OCI-LY7 (cell line): ENCODE measurements at regions of chr10 and their contacts with region 1.

Region 1: DNA sequence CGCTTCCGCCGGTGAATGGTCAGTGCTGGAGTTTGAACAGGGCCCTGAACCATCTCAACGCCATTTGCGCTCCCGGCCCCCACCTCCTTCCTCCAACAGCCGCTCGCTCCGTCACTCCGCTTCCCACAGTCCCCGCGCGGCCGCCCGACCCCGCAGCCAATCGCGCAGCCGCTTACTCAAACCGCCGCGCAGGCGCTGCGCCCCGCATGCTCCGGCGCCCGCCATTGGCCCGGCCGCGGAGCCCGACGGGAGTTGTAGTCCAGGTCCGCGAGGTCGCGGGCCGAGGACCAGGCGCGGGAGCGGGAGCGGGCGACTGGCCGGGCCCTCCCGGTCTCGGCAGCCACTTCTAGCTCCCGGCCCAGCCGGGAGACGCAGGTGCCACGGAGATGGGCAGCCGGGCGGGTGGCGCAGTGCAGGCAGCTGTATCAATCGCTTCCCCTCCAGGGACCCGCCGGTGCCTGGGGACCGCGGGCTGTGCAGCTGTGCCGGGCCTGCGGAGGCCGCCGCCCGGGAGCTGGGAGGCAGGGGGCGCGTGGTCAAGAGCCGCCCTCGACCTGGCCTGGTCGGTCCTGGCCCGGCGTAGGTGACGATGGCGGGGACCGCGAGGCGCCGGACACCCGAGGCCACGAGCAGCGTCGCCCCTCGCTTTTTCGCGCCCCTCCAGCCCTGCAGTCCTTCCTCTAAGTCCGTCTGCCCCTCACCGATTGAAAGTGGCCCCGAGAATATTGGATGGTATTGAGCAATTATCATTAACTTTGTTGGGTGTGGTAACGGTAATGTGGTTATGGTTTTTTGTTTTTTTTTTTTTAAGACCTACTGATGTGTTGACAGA is at the start of gene WAPL:
- DNase-seq: peak; percentile 95
- H3K4me3 ChIP-seq: peak within 1 kb of the TSS; percentile 93
- H3K27ac ChIP-seq: peak within 1 kb of the TSS; percentile 70
- H3K4me1 ChIP-seq: peaks cover 56% of the 10 kb centered on the region
- CTCF ChIP-seq: no peak
- total RNA-seq, gene WAPL: 51.1 and 56.6 TPM in 2 replicates

Region 2: DNA sequence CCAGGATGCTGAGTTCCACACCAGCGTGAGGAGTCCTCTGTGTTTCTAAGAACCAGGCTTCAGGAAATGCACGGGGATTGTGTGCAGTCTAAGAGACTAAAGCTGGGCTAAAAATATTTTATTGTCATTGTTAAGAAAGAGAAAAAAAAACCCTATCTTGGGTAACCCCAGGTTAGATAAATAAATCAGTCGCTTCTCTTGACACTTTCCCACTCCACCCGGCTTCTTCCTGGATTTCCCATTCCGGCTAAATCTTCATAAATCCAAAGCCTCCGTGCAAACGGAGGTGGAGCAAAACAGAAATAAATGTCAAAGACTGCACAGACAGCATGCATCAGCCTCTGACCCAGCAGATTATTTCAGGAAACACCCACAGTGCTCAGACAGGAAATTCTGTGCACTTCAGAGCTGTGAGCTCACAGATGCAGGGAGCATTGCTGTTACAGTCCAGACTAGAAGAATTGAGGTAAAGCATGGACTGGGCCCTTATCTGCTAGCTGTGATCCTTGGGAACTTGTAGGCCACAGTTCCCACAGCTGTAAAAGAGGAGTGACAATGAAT is 110.5 kb before region 1 on chr10:
- CTCF ChIA-PET with region 1: no interaction called
- POLR2A ChIA-PET with region 1: interaction called, 9 read pairs
- intact Hi-C with region 1: loop called (anchors 1 kb)
- DNase-seq: peak; percentile 91
- H3K4me3 ChIP-seq: peak overlapping the region; percentile 53
- H3K27ac ChIP-seq: peak overlapping the region; percentile 95
- H3K4me1 ChIP-seq: peaks cover 69% of the 10 kb centered on the region
- CTCF ChIP-seq: no peak

Region 3: GRCh38 chr10:86506499-86506898 is 15.4 kb before region 1 on chr10:
- CTCF ChIA-PET with region 1: no interaction called
- POLR2A ChIA-PET with region 1: interaction called, 15 read pairs
- intact Hi-C with region 1: loop called (anchors 1 kb)
- DNase-seq: peak; percentile 74
- H3K4me3 ChIP-seq: peak overlapping the region; percentile 55
- H3K27ac ChIP-seq: peak overlapping the region; percentile 84
- H3K4me1 ChIP-seq: peaks cover 57% of the 10 kb centered on the region
- CTCF ChIP-seq: no peak

Region 4: DNA sequence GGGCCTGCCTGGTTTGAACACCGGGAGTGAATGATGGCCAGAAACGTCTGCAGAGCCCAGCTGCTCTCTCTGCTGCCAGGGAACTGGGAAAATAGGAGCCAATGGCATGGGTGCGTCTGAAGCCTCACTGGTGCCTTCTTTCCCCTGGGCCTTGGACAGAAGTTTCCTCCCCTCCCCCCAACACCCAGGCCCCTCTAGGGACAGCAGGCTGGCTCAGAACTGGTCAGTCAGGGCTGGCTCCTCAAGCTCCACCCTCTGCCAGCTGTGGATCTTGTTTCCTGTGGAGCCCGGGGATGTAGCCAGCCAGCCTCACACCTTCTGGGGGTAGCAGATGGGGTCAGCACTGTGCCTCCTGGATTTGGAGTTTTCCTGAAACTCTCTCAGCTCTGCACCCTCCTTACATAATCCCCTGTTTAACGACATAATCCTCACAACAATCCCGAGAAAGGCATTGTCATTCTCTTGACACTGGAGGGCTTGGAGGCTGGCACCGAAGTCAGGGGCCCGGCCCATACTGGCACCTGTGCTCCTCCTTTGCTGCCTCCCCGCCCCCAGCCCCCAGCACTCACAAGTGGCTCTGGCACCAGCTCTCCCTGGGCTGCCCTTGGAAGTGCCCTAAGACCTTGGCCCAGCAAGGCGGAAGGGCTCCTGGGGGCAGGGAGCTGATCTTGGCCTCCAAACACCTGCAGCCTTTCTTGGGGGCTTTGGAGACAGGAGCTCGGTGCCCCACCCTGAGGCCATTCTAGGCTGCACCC is 152.1 kb after region 1 on chr10:
- CTCF ChIA-PET with region 1: no interaction called
- POLR2A ChIA-PET with region 1: interaction called, 5 read pairs
- intact Hi-C with region 1: loop called (anchors 5 kb)
- DNase-seq: no peak
- H3K4me3 ChIP-seq: no peak overlapping the region
- H3K27ac ChIP-seq: no peak overlapping the region
- H3K4me1 ChIP-seq: peaks cover 41% of the 10 kb centered on the region
- CTCF ChIP-seq: no peak